Dorsolateral prefrontal cortex (tissue), 120 donors: ENCODE measurements at regions of chr16 and their contacts with region 1.

Region 1: DNA sequence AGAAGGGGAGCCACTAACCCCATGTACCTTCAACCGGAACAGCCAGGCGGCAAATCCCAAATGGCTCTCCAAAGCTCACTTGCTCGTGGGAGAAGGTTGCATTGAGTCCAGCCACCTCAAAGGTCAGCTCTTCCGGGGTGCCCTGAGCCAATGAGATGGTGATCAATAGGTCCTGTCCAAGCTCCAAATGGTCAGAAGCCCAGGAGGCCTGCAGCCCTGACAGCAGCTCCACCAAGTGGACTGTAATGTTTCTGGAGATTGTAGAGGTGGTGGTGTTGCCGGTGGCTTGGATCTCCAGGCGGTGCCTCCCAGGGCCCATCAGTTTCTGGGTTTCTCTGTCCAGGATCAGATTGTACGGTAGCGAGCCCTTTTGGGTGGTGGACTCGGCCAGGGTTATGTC is 39.9 kb upstream of the BCO1 start:
- DNase-seq: peak in 4 of 10 donors; percentile 28 to 54 (median 39)
- H3K4me3 ChIP-seq: peak overlapping the region in 17 of 59 donors; percentile 2 to 53 (median 29)
- H3K27ac ChIP-seq: peak overlapping the region in 12 of 59 donors; percentile 3 to 64 (median 30)
- H3K27me3 ChIP-seq: peaks cover 0 to 3% (median 0%) of the 10 kb centered on the region in 45 donors
- CTCF ChIP-seq: peak in 44 of 56 donors; percentile 11 to 65 (median 39)

Region 2: DNA sequence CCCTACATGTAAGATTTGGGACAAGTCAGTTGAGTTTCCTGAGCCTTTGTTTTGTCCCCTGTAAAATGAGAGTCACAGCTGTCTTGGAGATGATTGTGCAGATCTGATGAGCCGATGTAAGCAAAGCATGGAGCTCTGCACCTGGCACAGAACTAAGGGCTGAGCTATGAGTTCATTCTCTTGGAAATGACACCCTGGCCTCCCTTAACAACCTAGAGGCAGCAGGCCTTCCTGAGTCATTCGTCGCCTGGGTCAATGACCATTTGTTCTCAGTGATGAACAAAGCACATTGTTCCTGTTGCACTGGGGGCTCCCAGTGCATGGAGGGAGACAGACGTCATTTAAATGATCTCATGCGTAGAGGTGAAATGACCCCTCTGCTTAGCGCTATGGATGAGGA is 39.7 kb before region 1 on chr16:
- intact Hi-C with region 1: loop called (anchors 5 kb)
- DNase-seq: peak in 7 of 10 donors; percentile 47 to 77 (median 65)
- H3K4me3 ChIP-seq: no peak overlapping the region
- H3K27ac ChIP-seq: peak overlapping the region; percentile 25 to 95 (median 89)
- H3K27me3 ChIP-seq: no peaks in the 10 kb centered on the region
- CTCF ChIP-seq: no peak